WTC11 (cell line): ENCODE measurements at regions of chr1 and their contacts with region 1.

Region 1: GRCh38 chr1:94481473-94481933 is 60.1 kb downstream of the F3 start:
- DNase-seq: peak; percentile 47
- ATAC-seq: peak; percentile 100
- H3K4me3 Mint-ChIP-seq: no peak overlapping the region
- H3K27ac Mint-ChIP-seq: peak overlapping the region; percentile 19; the same call in 1 of the 2 replicates
- H3K4me1 Mint-ChIP-seq: 0 out of 2 replicates have a peak, but pooled peaks cover 2% of the 10 kb centered on the region
- H3K27me3 Mint-ChIP-seq: no peaks in the 10 kb centered on the region
- CTCF ChIP-seq: peak; percentile 72

Region 2: GRCh38 chr1:94329986-94330385 is 151.5 kb before region 1 on chr1:
- CTCF ChIA-PET with region 1: no interaction called
- POLR2A ChIA-PET with region 1: no interaction called
- DNase-seq: no peak
- ATAC-seq: peak; percentile 74
- H3K4me3 Mint-ChIP-seq: no peak overlapping the region
- H3K27ac Mint-ChIP-seq: no peak overlapping the region
- H3K4me1 Mint-ChIP-seq: peaks cover 52% of the 10 kb centered on the region
- H3K27me3 Mint-ChIP-seq: peaks cover 4% of the 10 kb centered on the region; the same call in 1 of the 2 replicates
- CTCF ChIP-seq: no peak

Region 3: DNA sequence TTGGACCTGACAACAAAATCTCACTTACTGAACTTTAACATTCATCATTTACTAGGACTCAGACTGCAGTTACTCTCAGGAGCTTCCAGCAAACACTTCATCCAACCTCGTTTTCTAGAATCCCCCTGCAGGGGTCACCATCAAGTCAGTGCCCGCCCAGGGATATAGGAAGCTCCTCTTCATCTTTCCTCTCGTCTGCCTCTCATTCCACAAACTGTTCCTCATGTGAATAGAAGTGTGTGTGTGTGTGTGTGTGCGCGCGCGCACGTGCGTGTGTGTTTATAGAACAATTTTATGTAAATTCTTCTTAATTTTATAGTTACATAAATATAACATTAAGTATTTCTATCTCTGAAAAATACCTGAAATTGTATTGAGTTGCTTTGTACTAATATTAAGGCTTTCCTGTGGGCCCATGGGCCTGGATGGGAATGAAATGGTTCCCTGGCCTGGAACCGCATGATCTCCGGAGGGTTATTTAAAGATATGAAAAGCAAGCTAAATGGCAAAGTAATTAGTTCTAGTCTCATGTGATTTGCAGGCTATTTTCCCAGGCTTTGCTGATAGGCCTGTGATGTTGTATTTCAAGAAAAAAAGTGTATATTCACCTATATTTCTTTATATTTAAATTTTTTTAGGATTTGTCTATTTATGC is 85.0 kb before region 1 on chr1:
- CTCF ChIA-PET with region 1: interaction called, 12 read pairs
- POLR2A ChIA-PET with region 1: no interaction called
- DNase-seq: peak; percentile 47
- ATAC-seq: peak; percentile 82
- H3K4me3 Mint-ChIP-seq: no peak overlapping the region
- H3K27ac Mint-ChIP-seq: no peak overlapping the region; the same call in 1 of the 2 replicates
- H3K4me1 Mint-ChIP-seq: peaks cover 26% of the 10 kb centered on the region
- H3K27me3 Mint-ChIP-seq: no peaks in the 10 kb centered on the region
- CTCF ChIP-seq: no peak

Region 4: GRCh38 chr1:94463765-94464330 is 17.7 kb before region 1 on chr1:
- CTCF ChIA-PET with region 1: interaction called, 17 read pairs
- POLR2A ChIA-PET with region 1: no interaction called
- DNase-seq: no peak
- ATAC-seq: peak; percentile 46; the same call in 1 of the 2 replicates
- H3K4me3 Mint-ChIP-seq: no peak overlapping the region
- H3K27ac Mint-ChIP-seq: peak overlapping the region; percentile 6; the same call in 1 of the 2 replicates
- H3K4me1 Mint-ChIP-seq: peaks cover 4% of the 10 kb centered on the region; the same call in 1 of the 2 replicates
- H3K27me3 Mint-ChIP-seq: no peaks in the 10 kb centered on the region; the same call in 1 of the 2 replicates
- CTCF ChIP-seq: no peak

Region 5: GRCh38 chr1:94522304-94522703 is 40.8 kb after region 1 on chr1:
- CTCF ChIA-PET with region 1: interaction called, 15 read pairs
- POLR2A ChIA-PET with region 1: no interaction called
- DNase-seq: no peak
- ATAC-seq: peak; percentile 60
- H3K4me3 Mint-ChIP-seq: no peak overlapping the region
- H3K27ac Mint-ChIP-seq: no peak overlapping the region
- H3K4me1 Mint-ChIP-seq: peaks cover 21% of the 10 kb centered on the region
- H3K27me3 Mint-ChIP-seq: no peaks in the 10 kb centered on the region
- CTCF ChIP-seq: no peak

Region 6: GRCh38 chr1:94553323-94553730 is 71.8 kb after region 1 on chr1:
- CTCF ChIA-PET with region 1: no interaction called
- POLR2A ChIA-PET with region 1: no interaction called
- DNase-seq: no peak
- ATAC-seq: no peak
- H3K4me3 Mint-ChIP-seq: no peak overlapping the region; the same call in 1 of the 2 replicates
- H3K27ac Mint-ChIP-seq: no peak overlapping the region
- H3K4me1 Mint-ChIP-seq: peaks cover 49% of the 10 kb centered on the region
- H3K27me3 Mint-ChIP-seq: no peaks in the 10 kb centered on the region
- CTCF ChIP-seq: no peak

Region 7: GRCh38 chr1:94801919-94802546 is 320.5 kb after region 1 on chr1:
- CTCF ChIA-PET with region 1: interaction called, 14 read pairs
- POLR2A ChIA-PET with region 1: no interaction called
- DNase-seq: peak; percentile 46
- ATAC-seq: peak; percentile 82
- H3K4me3 Mint-ChIP-seq: no peak overlapping the region
- H3K27ac Mint-ChIP-seq: peak overlapping the region; percentile 61; the same call in 1 of the 2 replicates
- H3K4me1 Mint-ChIP-seq: peaks cover 33% of the 10 kb centered on the region
- H3K27me3 Mint-ChIP-seq: no peaks in the 10 kb centered on the region
- CTCF ChIP-seq: no peak